AG04449 (cell line): ENCODE measurements at regions of chr16 and their contacts with region 1.

Region 1: GRCh38 chr16:83952940-83953795 is at the start of gene OSGIN1:
- DNase-seq: peak; percentile 34
- H3K4me3 ChIP-seq: peak within 1 kb of the TSS; percentile 69
- CTCF ChIP-seq: no peak

Region 2: GRCh38 chr16:83968306-83968851 is 15.2 kb after region 1 on chr16:
- CTCF ChIA-PET with region 1: interaction called, 18 read pairs
- POLR2A ChIA-PET with region 1: no interaction called
- DNase-seq: no peak
- H3K4me3 ChIP-seq: peak overlapping the region; percentile 42
- CTCF ChIP-seq: no peak

Region 3: GRCh38 chr16:84044118-84044488 is 90.9 kb after region 1 on chr16:
- CTCF ChIA-PET with region 1: interaction called, 33 read pairs
- POLR2A ChIA-PET with region 1: no interaction called
- DNase-seq: no peak
- H3K4me3 ChIP-seq: no peak overlapping the region
- CTCF ChIP-seq: peak; percentile 30